Dendritic cell treated with granulocyte-macrophage colony-stimulating factor and Interleukin-4, amounts not matched to agents 40 ng/mL and 50 ng/mL, for 4 days (primary cell): ENCODE measurements at regions of chr10 and their contacts with region 1.

Region 1: GRCh38 chr10:62244780-62245467 is 23.7 kb downstream of the RTKN2 start:
- H3K4me3 Mint-ChIP-seq: peak overlapping the region; percentile 62
- H3K27ac Mint-ChIP-seq: peak overlapping the region; percentile 92
- H3K4me1 Mint-ChIP-seq: peaks cover 11% of the 10 kb centered on the region
- H3K27me3 Mint-ChIP-seq: no peaks in the 10 kb centered on the region

Region 2: GRCh38 chr10:61896854-61897661 is 347.9 kb before region 1 on chr10:
- intact Hi-C with region 1: loop called (anchors 2 kb)
- H3K4me3 Mint-ChIP-seq: peak overlapping the region; percentile 66
- H3K27ac Mint-ChIP-seq: peak overlapping the region; percentile 72
- H3K4me1 Mint-ChIP-seq: peaks cover 29% of the 10 kb centered on the region
- H3K27me3 Mint-ChIP-seq: no peaks in the 10 kb centered on the region

Region 3: DNA sequence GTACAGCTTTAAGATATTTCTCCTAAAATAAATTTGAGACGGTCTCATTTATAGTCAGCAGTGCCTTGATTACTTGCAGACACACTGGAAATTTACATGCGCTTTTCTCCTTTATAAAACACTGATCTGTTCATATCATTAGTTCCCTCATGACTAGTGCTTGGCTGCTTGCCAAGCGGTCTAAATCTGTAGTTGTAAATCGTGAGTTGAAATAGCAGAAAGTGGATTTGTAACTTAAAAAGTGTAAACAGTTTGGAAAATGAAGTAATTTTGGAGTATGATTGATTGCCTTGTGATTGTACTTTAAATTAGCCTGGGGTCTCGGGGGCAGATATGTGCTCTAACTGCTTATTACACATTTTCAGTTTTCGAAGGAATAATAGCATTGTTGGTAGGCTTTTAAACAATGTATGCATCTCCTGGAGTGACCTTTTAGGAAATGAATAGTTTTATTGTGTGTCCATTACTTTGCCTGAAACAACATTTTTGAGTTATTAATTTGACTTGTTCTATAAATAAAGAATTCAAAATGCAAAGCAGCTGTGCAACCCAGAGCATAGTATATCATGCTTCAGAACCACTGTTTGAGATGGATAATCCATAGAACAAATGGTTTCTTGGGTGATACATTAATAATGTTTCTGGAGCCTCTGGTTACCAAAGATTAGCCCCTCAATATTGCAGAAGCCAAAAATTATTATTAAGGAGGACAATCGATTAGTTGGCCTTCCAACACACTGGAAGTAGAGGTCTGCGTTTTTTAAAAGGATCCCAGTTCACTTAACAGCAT is 270.1 kb before region 1 on chr10:
- intact Hi-C with region 1: loop called (anchors 2 kb)
- H3K4me3 Mint-ChIP-seq: no peak overlapping the region
- H3K27ac Mint-ChIP-seq: peak overlapping the region; percentile 22
- H3K4me1 Mint-ChIP-seq: peaks cover 42% of the 10 kb centered on the region
- H3K27me3 Mint-ChIP-seq: no peaks in the 10 kb centered on the region

Region 4: GRCh38 chr10:62038609-62039190 is 206.2 kb before region 1 on chr10:
- intact Hi-C with region 1: loop called (anchors 1 kb)
- H3K4me3 Mint-ChIP-seq: peak overlapping the region; percentile 44
- H3K27ac Mint-ChIP-seq: peak overlapping the region; percentile 64
- H3K4me1 Mint-ChIP-seq: peaks cover 45% of the 10 kb centered on the region
- H3K27me3 Mint-ChIP-seq: no peaks in the 10 kb centered on the region

Region 5: GRCh38 chr10:62109587-62110293 is 135.2 kb before region 1 on chr10:
- intact Hi-C with region 1: loop called (anchors 2 kb)
- H3K4me3 Mint-ChIP-seq: no peak overlapping the region
- H3K27ac Mint-ChIP-seq: peak overlapping the region; percentile 91
- H3K4me1 Mint-ChIP-seq: peaks cover 67% of the 10 kb centered on the region
- H3K27me3 Mint-ChIP-seq: no peaks in the 10 kb centered on the region

Region 6: DNA sequence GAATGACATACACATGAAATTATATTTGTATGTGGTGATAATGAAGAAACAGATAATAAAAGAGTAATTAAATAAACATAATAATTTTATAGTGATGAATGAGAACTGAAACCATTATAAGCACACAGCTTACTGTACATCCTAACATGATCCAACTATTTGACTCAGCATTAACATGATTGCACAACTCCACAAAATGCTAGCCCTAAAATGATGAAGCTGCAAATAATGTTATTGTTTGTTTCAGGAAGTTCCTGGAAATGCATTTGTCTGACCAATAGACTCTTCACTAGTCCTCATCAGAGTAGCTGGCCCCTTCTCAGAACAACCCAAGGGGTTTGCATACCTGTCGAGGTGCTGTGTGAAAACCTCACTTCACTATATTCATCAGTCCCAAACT is 91.7 kb before region 1 on chr10:
- intact Hi-C with region 1: loop called (anchors 5 kb)
- H3K4me3 Mint-ChIP-seq: no peak overlapping the region
- H3K27ac Mint-ChIP-seq: peak overlapping the region; percentile 88
- H3K4me1 Mint-ChIP-seq: peaks cover 47% of the 10 kb centered on the region
- H3K27me3 Mint-ChIP-seq: no peaks in the 10 kb centered on the region

Region 7: GRCh38 chr10:62166331-62167131 is 78.4 kb before region 1 on chr10:
- intact Hi-C with region 1: loop called (anchors 5 kb)
- H3K4me3 Mint-ChIP-seq: no peak overlapping the region
- H3K27ac Mint-ChIP-seq: peak overlapping the region; percentile 92
- H3K4me1 Mint-ChIP-seq: peaks cover 28% of the 10 kb centered on the region
- H3K27me3 Mint-ChIP-seq: no peaks in the 10 kb centered on the region

Region 8: DNA sequence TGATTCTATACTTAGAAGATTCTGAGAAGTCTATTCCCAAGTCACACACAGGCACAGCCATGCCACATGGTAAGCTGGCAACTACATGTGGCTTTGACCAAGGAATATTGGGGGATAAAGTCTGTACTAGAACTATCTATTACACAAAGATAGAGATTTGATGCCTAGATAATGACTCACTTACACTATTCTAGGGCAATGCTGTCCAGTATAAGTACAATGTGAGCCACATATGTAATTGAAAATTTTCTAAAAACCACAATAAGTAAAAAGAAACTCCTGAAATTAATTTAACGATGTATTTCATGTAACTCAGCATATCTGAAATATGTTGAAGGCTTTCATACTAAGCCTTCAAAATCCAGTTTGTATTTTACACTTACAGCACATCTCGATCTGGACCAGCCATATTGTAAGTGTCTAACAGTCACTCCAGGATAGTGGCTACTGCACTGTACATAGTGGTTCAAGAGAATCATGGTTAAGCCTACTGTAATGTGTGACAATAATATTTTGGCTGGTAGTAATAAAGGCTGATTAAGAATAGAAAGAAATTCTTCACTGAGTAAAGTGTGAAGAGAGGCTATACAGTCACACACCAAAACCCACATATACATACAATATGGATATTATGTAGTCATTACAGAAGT is 39.0 kb before region 1 on chr10:
- intact Hi-C with region 1: no loop called
- H3K4me3 Mint-ChIP-seq: no peak overlapping the region
- H3K27ac Mint-ChIP-seq: no peak overlapping the region
- H3K4me1 Mint-ChIP-seq: peaks cover 7% of the 10 kb centered on the region
- H3K27me3 Mint-ChIP-seq: no peaks in the 10 kb centered on the region